PC-9 (cell line): ENCODE measurements at regions of chr2 and their contacts with region 1.

Region 1: DNA sequence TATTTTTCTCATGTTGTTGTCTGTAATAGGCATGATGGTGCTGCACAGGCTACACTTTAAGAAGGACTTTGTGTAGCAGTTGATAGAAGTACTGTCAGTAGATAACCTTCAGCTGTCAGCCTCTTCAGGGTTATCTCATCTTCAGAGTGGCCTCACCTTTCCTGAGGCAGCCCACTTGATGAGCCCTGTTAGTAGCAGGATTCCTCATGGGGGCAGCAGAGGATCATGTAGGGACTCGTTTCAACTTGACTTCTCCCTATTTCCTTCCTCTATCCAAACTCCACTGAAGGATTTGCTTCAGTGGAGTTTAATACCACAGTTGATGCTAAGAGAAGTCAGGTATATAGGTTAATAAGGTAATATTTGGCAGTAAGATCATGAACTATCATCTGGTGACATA is 530.3 kb upstream of the FSIP2 start:
- DNase-seq: peak in 1 of 2 experiments; percentile 6
- H3K4me3 ChIP-seq: no peak overlapping the region
- H3K27ac ChIP-seq: no peak overlapping the region
- H3K4me1 ChIP-seq: no peaks in the 10 kb centered on the region
- H3K27me3 ChIP-seq: no peaks in the 10 kb centered on the region
- CTCF ChIP-seq: peak; percentile 57; the same call in 1 of the 2 replicates

Region 2: DNA sequence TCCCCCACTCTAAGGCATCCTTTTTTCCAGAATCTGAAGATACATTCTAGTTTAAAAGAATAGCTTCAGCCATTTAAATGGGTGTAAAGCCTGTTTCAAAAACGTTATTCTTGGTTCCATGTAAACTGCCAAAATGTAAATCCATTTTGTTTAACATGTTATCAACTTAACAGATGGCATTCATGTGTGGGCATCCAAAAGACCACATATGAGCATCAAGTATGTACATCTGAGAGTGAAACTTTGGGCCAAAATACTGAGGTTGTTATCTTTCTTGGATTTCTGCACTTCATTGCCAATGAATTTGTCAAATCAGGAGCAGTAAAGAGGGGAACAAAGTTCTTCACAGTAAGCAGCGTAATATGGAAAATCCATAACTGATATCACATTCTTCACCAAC is 214.5 kb before region 1 on chr2:
- CTCF ChIA-PET with region 1: no interaction called
- POLR2A ChIA-PET with region 1: no interaction called
- intact Hi-C with region 1: no loop called
- DNase-seq: no peak
- H3K4me3 ChIP-seq: no peak overlapping the region
- H3K27ac ChIP-seq: no peak overlapping the region
- H3K4me1 ChIP-seq: no peaks in the 10 kb centered on the region
- H3K27me3 ChIP-seq: no peaks in the 10 kb centered on the region
- CTCF ChIP-seq: no peak

Region 3: DNA sequence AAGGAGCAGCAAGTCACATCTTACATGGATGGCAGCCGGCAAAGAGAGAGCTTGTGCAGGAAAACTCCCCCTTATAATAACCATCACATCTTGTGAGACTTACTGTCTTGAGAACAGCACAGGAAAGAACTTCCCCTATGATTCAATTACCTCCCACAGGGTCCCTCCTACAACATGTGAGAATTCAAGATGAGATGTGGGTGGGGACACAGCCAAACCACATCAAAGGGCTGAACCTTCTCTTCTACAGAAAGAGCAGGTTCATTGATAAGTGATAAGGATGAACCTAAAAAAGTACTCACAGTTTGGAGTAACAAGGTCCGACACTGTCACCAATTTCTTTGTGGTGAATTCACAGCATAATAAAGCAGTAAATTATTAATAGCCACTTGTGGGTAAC is 108.1 kb after region 1 on chr2:
- CTCF ChIA-PET with region 1: no interaction called
- POLR2A ChIA-PET with region 1: no interaction called
- intact Hi-C with region 1: no loop called
- DNase-seq: no peak
- H3K4me3 ChIP-seq: no peak overlapping the region
- H3K27ac ChIP-seq: no peak overlapping the region
- H3K4me1 ChIP-seq: no peaks in the 10 kb centered on the region
- H3K27me3 ChIP-seq: no peaks in the 10 kb centered on the region
- CTCF ChIP-seq: no peak

Region 4: GRCh38 chr2:186459009-186459408 is 1250.7 kb after region 1 on chr2:
- CTCF ChIA-PET with region 1: no interaction called
- POLR2A ChIA-PET with region 1: no interaction called
- intact Hi-C with region 1: loop called (anchors 10 kb)
- DNase-seq: no peak
- H3K4me3 ChIP-seq: no peak overlapping the region
- H3K27ac ChIP-seq: no peak overlapping the region
- H3K4me1 ChIP-seq: no peaks in the 10 kb centered on the region
- H3K27me3 ChIP-seq: no peaks in the 10 kb centered on the region
- CTCF ChIP-seq: no peak; the same call in 1 of the 2 replicates